ENCODE measurements at regions of chr1 and their contacts with region 1.

Region 1: GRCh38 chr1:223845810-223846682 is at the start of gene TP53BP2:
- DNase-seq: peak; percentile 80 to 92 (median 84)
- ATAC-seq: peak; percentile 82 to 85
- H3K4me3 Mint-ChIP-seq: peak within 1 kb of the TSS; percentile 89 to 98 (median 96)
- H3K27ac Mint-ChIP-seq: peak within 1 kb of the TSS; percentile 92 to 99 (median 98)
- H3K4me1 Mint-ChIP-seq: peaks cover 14 to 45% (median 28%) of the 10 kb centered on the region in 4 donors
- H3K27me3 Mint-ChIP-seq: peaks cover 0 to 6% (median 0%) of the 10 kb centered on the region in 5 donors
- polyA plus RNA-seq, gene TP53BP2: 7.4 to 10.8 (median 9.3) TPM

Region 2: GRCh38 chr1:223811634-223812415 is 34.2 kb before region 1 on chr1:
- POLR2A ChIA-PET with region 1: interaction called, 18 read pairs
- DNase-seq: peak in 3 of 10 donors; percentile 39 to 51 (median 45)
- ATAC-seq: peak; percentile 72
- H3K4me3 Mint-ChIP-seq: no peak overlapping the region
- H3K27ac Mint-ChIP-seq: no peak overlapping the region
- H3K4me1 Mint-ChIP-seq: peaks cover 19 to 33% (median 24%) of the 10 kb centered on the region in 4 donors
- H3K27me3 Mint-ChIP-seq: no peaks in the 10 kb centered on the region

Region 3: GRCh38 chr1:223825767-223826748 is 20.0 kb before region 1 on chr1:
- POLR2A ChIA-PET with region 1: interaction called, 12 read pairs
- DNase-seq: no peak
- ATAC-seq: peak; percentile 30 to 32
- H3K4me3 Mint-ChIP-seq: peak overlapping the region in 9 of 10 donors; percentile 11 to 72 (median 45)
- H3K27ac Mint-ChIP-seq: peak overlapping the region in 6 of 10 donors; percentile 31 to 70 (median 46)
- H3K4me1 Mint-ChIP-seq: peaks cover 35 to 71% (median 55%) of the 10 kb centered on the region in 4 donors
- H3K27me3 Mint-ChIP-seq: no peaks in the 10 kb centered on the region

Region 4: DNA sequence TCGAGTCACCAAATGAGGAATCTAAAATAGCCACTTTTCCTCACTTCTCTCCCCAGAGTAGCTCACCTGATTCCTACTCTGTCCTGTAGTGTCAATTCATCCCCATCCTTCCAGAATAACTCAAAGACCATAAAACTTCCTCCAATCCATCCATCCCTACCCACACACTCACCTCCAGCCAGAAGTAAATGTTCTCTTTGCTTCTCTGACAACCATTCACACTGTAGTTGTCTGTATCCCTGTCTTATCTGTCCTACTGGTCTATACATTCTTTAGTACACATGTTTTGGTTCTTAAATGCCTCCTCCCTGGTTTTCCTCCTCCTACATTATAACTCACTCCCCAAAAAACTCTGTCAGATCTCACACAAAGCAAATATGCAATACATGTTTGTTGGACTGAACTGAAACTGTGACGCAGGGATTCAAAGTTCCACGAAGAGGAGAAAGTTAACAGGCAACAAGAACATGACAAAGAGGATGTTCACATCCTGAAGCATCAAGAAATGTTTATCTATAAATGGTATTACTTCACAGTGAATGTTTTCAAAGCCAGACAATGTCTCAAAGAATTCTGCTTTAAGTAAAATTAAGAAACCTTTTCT is 11.3 kb before region 1 on chr1:
- POLR2A ChIA-PET with region 1: interaction called, 17 read pairs
- DNase-seq: no peak
- ATAC-seq: no peak
- H3K4me3 Mint-ChIP-seq: no peak overlapping the region
- H3K27ac Mint-ChIP-seq: no peak overlapping the region
- H3K4me1 Mint-ChIP-seq: peaks cover 17 to 36% (median 29%) of the 10 kb centered on the region in 4 donors
- H3K27me3 Mint-ChIP-seq: no peaks in the 10 kb centered on the region

Measured in naive thymus-derived CD8-positive, alpha-beta T cell (primary cell).